CD4-positive, alpha-beta memory T cell (primary cell): ENCODE measurements at regions of chr11 and their contacts with region 1.

Region 1: GRCh38 chr11:111777094-111778046 is 11.2 kb upstream of the PPP2R1B start:
- DNase-seq: peak in 4 of 5 donors; percentile 51 to 63 (median 60)
- H3K4me3 ChIP-seq: no peak overlapping the region
- H3K4me3 Mint-ChIP-seq: no peak overlapping the region
- H3K27ac ChIP-seq: no peak overlapping the region
- H3K27ac Mint-ChIP-seq: no peak overlapping the region
- H3K4me1 ChIP-seq: no peaks in the 10 kb centered on the region
- H3K4me1 Mint-ChIP-seq: no peaks in the 10 kb centered on the region
- H3K27me3 ChIP-seq: no peaks in the 10 kb centered on the region
- H3K27me3 Mint-ChIP-seq: no peaks in the 10 kb centered on the region

Region 2: GRCh38 chr11:111565114-111565720 is 212.2 kb before region 1 on chr11:
- CTCF ChIA-PET with region 1: interaction called, 38 read pairs
- POLR2A ChIA-PET with region 1: no interaction called
- intact Hi-C with region 1: loop called (anchors 1 kb)
- DNase-seq: peak; percentile 47 to 58 (median 57)
- H3K4me3 ChIP-seq: no peak overlapping the region
- H3K4me3 Mint-ChIP-seq: no peak overlapping the region
- H3K27ac ChIP-seq: no peak overlapping the region
- H3K27ac Mint-ChIP-seq: no peak overlapping the region
- H3K4me1 ChIP-seq: no peaks in the 10 kb centered on the region
- H3K4me1 Mint-ChIP-seq: no peaks in the 10 kb centered on the region
- H3K27me3 ChIP-seq: no peaks in the 10 kb centered on the region
- H3K27me3 Mint-ChIP-seq: peaks cover 0 to 4% of the 10 kb centered on the region in 2 donors

Region 3: GRCh38 chr11:111601979-111602864 is 175.1 kb before region 1 on chr11 and contains the start of gene SIK2:
- CTCF ChIA-PET with region 1: interaction called, 17 read pairs
- POLR2A ChIA-PET with region 1: interaction called, 3 read pairs
- intact Hi-C with region 1: loop called (anchors 1 kb)
- DNase-seq: peak; percentile 87 to 90 (median 88)
- H3K4me3 ChIP-seq: peak within 1 kb of the TSS; percentile 66 to 75
- H3K4me3 Mint-ChIP-seq: peak within 1 kb of the TSS; percentile 90 to 99 (median 96)
- H3K27ac ChIP-seq: peak within 1 kb of the TSS; percentile 85
- H3K27ac Mint-ChIP-seq: peak within 1 kb of the TSS; percentile 91 to 99 (median 98)
- H3K4me1 ChIP-seq: peaks cover 24% of the 10 kb centered on the region
- H3K4me1 Mint-ChIP-seq: peaks cover 13 to 37% (median 19%) of the 10 kb centered on the region in 4 donors
- H3K27me3 ChIP-seq: no peaks in the 10 kb centered on the region
- H3K27me3 Mint-ChIP-seq: no peaks in the 10 kb centered on the region
- total RNA-seq, gene SIK2: 12.8 to 13.8 TPM

Region 4: DNA sequence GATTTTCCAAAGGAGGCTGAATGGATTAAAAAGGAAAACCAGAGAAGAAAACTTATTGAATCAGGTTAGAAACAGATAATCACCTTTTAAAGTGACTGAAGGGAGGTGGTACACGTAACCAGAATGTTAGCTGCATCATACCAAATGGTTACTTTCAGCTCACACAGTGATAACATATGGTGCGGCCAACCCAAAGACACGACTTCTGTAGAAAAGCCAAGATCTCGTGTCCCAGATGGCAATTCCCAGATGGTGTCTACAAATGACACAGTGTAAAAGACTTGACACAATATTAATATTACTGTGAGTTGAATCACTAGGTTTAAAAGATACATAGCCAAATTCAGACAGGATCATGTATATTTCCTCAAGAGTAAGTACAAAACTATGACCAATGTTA is 16.3 kb before region 1 on chr11:
- CTCF ChIA-PET with region 1: interaction called, 103 read pairs
- POLR2A ChIA-PET with region 1: interaction called, 5 read pairs
- intact Hi-C with region 1: no loop called
- DNase-seq: no peak
- H3K4me3 ChIP-seq: no peak overlapping the region
- H3K4me3 Mint-ChIP-seq: no peak overlapping the region
- H3K27ac ChIP-seq: no peak overlapping the region
- H3K27ac Mint-ChIP-seq: peak overlapping the region in 1 of 7 donors; percentile 76
- H3K4me1 ChIP-seq: peaks cover 17% of the 10 kb centered on the region
- H3K4me1 Mint-ChIP-seq: peaks cover 28 to 45% (median 33%) of the 10 kb centered on the region in 4 donors
- H3K27me3 ChIP-seq: no peaks in the 10 kb centered on the region
- H3K27me3 Mint-ChIP-seq: no peaks in the 10 kb centered on the region

Region 5: DNA sequence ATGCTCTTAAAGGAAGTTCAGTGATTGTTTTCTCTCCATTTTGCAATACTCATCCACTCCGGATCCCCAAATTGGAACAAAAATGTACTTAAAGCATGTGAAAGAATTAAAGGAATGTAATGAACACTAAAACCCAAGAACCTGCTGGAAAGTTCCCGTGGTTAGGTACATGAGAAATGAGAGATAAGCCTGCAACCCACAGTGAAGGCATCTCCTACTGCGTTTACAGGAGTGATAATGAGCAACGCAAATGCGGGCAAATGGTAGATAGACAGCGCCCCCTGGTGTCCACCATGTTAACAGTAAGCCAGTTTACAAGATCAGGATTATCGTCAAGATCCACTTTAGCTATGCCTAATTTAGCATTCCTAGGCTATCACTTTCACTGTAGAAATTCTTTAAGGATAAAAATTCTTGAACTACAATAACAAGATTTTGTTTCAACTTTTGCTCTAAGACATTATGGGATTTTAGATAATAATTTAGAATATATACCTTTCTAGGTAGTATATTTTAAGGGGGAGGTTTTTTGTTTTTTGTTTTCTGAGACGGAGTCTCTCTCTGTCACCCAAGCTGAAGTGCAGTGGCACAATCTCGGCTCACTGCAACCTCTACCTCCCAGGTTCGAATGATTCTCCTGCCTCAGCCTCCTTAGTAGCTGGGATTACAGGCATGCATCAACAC is 64.1 kb after region 1 on chr11:
- CTCF ChIA-PET with region 1: interaction called, 11 read pairs
- POLR2A ChIA-PET with region 1: no interaction called
- intact Hi-C with region 1: loop called (anchors 2 kb)
- DNase-seq: peak; percentile 69 to 81 (median 72)
- H3K4me3 ChIP-seq: no peak overlapping the region
- H3K4me3 Mint-ChIP-seq: no peak overlapping the region
- H3K27ac ChIP-seq: no peak overlapping the region
- H3K27ac Mint-ChIP-seq: peak overlapping the region in 1 of 7 donors; percentile 25
- H3K4me1 ChIP-seq: peaks cover 5% of the 10 kb centered on the region
- H3K4me1 Mint-ChIP-seq: peaks cover 2 to 6% (median 4%) of the 10 kb centered on the region in 4 donors
- H3K27me3 ChIP-seq: no peaks in the 10 kb centered on the region
- H3K27me3 Mint-ChIP-seq: no peaks in the 10 kb centered on the region